ENCODE measurements at regions of chr1 and their contacts with region 1.

Region 1: DNA sequence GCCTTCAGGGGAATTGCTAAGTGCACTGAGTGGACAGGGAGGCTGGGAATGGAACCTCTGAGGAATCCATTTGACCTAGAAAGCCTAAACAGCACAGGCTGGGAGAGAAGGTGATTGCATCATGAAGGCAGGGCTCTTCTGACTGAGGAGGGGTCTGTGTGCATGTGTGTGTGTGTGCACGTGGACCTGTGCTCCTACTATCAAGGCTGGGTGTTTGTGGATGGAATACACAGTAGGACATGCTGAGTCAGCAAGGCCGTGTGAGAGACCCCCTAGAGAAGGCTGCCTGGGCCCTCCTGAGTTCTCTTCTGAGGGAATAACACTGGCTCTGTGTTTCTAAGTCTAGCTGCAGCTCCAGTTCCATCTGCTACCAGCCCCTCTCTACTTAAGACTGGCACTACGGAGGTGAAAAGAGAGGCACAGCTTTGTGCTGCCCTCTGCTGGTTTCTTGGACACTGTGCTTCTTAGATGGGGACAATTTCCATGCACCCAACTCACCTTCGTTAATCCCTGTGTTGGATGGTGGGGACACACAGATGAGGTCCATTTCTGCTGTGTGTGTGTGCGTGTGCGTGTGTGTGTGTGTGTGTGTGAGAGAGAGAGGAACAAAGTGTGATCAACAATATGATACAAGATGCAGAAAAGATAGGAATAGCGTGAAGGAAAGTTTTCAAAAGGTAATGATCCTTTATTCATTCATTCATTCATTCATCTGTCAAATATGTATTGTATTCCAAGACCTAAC is 6.2 kb upstream of the EFCAB14 start:
- DNase-seq: peak; percentile 84
- ATAC-seq: peak; percentile 99
- H3K4me3 Mint-ChIP-seq: no peak overlapping the region
- H3K27ac Mint-ChIP-seq: no peak overlapping the region
- H3K4me1 Mint-ChIP-seq: no peaks in the 10 kb centered on the region
- H3K27me3 Mint-ChIP-seq: peaks cover 26% of the 10 kb centered on the region
- CTCF ChIP-seq: peak; percentile 62

Region 2: DNA sequence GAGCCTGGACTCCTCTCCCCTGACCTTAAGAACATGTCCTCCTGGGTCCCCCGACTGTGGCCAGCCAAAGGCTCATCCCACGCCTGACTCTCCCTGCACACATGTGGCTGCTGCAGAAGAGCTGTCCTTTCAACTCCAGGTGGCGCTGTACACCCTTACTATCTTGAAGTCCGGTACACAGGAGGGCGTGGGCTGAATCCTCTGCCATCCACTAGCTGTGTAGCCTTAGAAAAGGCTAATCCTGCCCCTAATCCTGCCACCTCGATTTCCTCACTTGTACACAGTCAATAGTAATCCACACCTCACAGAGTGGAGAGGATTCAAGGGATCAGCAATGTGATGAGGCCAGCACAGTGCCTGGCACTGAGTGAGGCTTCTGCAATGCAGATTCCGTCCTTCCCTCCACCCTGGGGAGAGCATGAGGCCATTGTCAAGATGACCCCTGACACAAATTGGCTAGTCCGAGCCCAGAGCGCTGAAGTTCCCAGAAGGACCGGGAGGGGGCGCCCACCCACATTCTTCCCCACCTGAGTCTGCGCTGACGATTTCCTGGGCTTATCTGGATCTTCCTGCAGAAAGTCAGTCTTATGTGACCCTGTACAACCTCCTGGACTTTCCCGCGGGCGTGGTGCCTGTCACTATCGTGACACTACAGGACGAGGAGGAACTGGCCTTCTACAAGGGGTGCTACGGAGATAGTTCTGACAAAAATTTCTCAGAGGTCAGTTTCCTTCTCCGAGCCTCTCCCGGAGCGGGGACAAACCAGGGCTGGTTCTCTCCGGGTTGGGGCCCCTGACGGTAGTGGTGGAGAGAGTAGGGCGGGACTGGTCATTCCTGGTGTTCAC is 282.6 kb before region 1 on chr1:
- CTCF ChIA-PET with region 1: interaction called, 22 read pairs
- POLR2A ChIA-PET with region 1: no interaction called
- intact Hi-C with region 1: no loop called
- DNase-seq: peak; percentile 86
- ATAC-seq: peak; percentile 86
- H3K4me3 Mint-ChIP-seq: peak overlapping the region; percentile 79
- H3K27ac Mint-ChIP-seq: peak overlapping the region; percentile 40
- H3K4me1 Mint-ChIP-seq: peaks cover 10% of the 10 kb centered on the region
- H3K27me3 Mint-ChIP-seq: peaks cover 18% of the 10 kb centered on the region
- CTCF ChIP-seq: peak; percentile 99

Region 3: GRCh38 chr1:46556822-46557221 is 168.3 kb before region 1 on chr1:
- CTCF ChIA-PET with region 1: no interaction called
- POLR2A ChIA-PET with region 1: no interaction called
- intact Hi-C with region 1: no loop called
- DNase-seq: no peak
- ATAC-seq: peak; percentile 56
- H3K4me3 Mint-ChIP-seq: no peak overlapping the region
- H3K27ac Mint-ChIP-seq: no peak overlapping the region
- H3K4me1 Mint-ChIP-seq: no peaks in the 10 kb centered on the region
- H3K27me3 Mint-ChIP-seq: no peaks in the 10 kb centered on the region
- CTCF ChIP-seq: no peak

Region 4: GRCh38 chr1:46592823-46593222 is 132.3 kb before region 1 on chr1:
- CTCF ChIA-PET with region 1: no interaction called
- POLR2A ChIA-PET with region 1: no interaction called
- intact Hi-C with region 1: no loop called
- DNase-seq: no peak
- ATAC-seq: no peak
- H3K4me3 Mint-ChIP-seq: no peak overlapping the region
- H3K27ac Mint-ChIP-seq: no peak overlapping the region
- H3K4me1 Mint-ChIP-seq: peaks cover 19% of the 10 kb centered on the region
- H3K27me3 Mint-ChIP-seq: no peaks in the 10 kb centered on the region
- CTCF ChIP-seq: no peak

Region 5: GRCh38 chr1:46603858-46604549 is 121.2 kb before region 1 on chr1 and contains the start of gene MKNK1:
- CTCF ChIA-PET with region 1: interaction called, 20 read pairs
- POLR2A ChIA-PET with region 1: interaction called, 3 read pairs
- intact Hi-C with region 1: no loop called
- DNase-seq: peak; percentile 98
- ATAC-seq: peak; percentile 99
- H3K4me3 Mint-ChIP-seq: peak within 1 kb of the TSS; percentile 89
- H3K27ac Mint-ChIP-seq: peak within 1 kb of the TSS; percentile 87
- H3K4me1 Mint-ChIP-seq: peaks cover 46% of the 10 kb centered on the region
- H3K27me3 Mint-ChIP-seq: no peaks in the 10 kb centered on the region
- CTCF ChIP-seq: no peak
- total RNA-seq, gene MKNK1: 31.1 to 35.5 TPM

Region 6: DNA sequence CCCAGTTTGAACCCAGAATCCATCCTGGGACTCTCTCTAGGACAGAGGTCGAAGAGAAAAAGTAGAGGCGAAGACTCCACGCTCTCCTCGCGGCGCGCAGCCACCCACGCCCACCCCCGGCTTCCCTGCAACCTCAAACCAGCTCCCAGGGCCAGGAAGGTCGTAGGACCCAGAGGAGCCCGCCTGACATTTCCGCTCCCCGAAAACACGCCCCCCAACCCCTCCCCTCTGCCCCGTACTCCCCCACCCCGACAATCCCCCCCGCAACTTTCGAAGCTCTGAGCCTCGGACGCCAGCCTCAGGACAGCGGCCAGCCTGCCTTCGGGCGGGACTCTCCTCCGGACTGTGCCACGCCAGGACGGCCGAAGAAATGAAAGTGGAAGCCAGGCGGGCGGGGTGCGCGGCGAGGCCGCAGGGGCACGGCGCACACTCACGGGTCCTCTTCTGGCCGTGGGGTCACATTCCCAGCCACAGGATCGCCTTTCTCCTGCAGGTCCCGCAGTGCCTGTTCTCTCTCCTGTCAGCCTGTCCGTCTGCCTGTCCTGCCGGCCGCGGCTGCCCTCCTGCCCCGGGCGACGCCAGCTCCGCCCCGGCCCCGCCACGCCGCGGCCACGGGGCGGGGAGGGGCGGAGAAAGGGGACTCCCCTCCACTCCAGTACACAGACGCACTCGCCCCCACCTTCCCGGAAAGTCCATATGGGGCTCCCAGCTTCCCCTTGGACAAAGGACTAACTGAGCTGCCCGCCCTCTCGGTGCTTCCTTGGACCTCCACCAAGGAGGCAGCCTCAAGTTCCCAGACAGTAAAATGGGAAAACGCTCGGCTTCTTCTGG is 108.7 kb before region 1 on chr1 and contains the start of gene MOB3C:
- CTCF ChIA-PET with region 1: interaction called, 3 read pairs
- POLR2A ChIA-PET with region 1: interaction called, 5 read pairs
- intact Hi-C with region 1: loop called (anchors 10 kb)
- DNase-seq: peak; percentile 74
- ATAC-seq: peak; percentile 65
- H3K4me3 Mint-ChIP-seq: peak within 1 kb of the TSS; percentile 88
- H3K27ac Mint-ChIP-seq: peak within 1 kb of the TSS; percentile 91
- H3K4me1 Mint-ChIP-seq: peaks cover 47% of the 10 kb centered on the region
- H3K27me3 Mint-ChIP-seq: no peaks in the 10 kb centered on the region
- CTCF ChIP-seq: no peak
- total RNA-seq, gene MOB3C: 6.3 to 8.7 TPM

Region 7: GRCh38 chr1:46697053-46697452 is 28.1 kb before region 1 on chr1:
- CTCF ChIA-PET with region 1: no interaction called
- POLR2A ChIA-PET with region 1: no interaction called
- intact Hi-C with region 1: no loop called
- DNase-seq: no peak
- ATAC-seq: no peak
- H3K4me3 Mint-ChIP-seq: no peak overlapping the region
- H3K27ac Mint-ChIP-seq: no peak overlapping the region
- H3K4me1 Mint-ChIP-seq: peaks cover 11% of the 10 kb centered on the region
- H3K27me3 Mint-ChIP-seq: no peaks in the 10 kb centered on the region
- CTCF ChIP-seq: no peak

Region 8: GRCh38 chr1:46708121-46708520 is 17.0 kb before region 1 on chr1:
- CTCF ChIA-PET with region 1: interaction called, 17 read pairs
- POLR2A ChIA-PET with region 1: no interaction called
- intact Hi-C with region 1: no loop called
- DNase-seq: no peak
- ATAC-seq: no peak
- H3K4me3 Mint-ChIP-seq: no peak overlapping the region
- H3K27ac Mint-ChIP-seq: no peak overlapping the region
- H3K4me1 Mint-ChIP-seq: peaks cover 30% of the 10 kb centered on the region
- H3K27me3 Mint-ChIP-seq: no peaks in the 10 kb centered on the region
- CTCF ChIP-seq: no peak

Region 9: GRCh38 chr1:46940307-46940706 is 215.1 kb after region 1 on chr1:
- CTCF ChIA-PET with region 1: no interaction called
- POLR2A ChIA-PET with region 1: no interaction called
- intact Hi-C with region 1: no loop called
- DNase-seq: no peak
- ATAC-seq: no peak
- H3K4me3 Mint-ChIP-seq: no peak overlapping the region
- H3K27ac Mint-ChIP-seq: no peak overlapping the region
- H3K4me1 Mint-ChIP-seq: no peaks in the 10 kb centered on the region
- H3K27me3 Mint-ChIP-seq: peaks cover 10% of the 10 kb centered on the region
- CTCF ChIP-seq: no peak